Activated B cell treated with CpG ODN at 0.5 μM for 24 hours (primary cell): ENCODE measurements at regions of chr14 and their contacts with region 1.

Region 1: DNA sequence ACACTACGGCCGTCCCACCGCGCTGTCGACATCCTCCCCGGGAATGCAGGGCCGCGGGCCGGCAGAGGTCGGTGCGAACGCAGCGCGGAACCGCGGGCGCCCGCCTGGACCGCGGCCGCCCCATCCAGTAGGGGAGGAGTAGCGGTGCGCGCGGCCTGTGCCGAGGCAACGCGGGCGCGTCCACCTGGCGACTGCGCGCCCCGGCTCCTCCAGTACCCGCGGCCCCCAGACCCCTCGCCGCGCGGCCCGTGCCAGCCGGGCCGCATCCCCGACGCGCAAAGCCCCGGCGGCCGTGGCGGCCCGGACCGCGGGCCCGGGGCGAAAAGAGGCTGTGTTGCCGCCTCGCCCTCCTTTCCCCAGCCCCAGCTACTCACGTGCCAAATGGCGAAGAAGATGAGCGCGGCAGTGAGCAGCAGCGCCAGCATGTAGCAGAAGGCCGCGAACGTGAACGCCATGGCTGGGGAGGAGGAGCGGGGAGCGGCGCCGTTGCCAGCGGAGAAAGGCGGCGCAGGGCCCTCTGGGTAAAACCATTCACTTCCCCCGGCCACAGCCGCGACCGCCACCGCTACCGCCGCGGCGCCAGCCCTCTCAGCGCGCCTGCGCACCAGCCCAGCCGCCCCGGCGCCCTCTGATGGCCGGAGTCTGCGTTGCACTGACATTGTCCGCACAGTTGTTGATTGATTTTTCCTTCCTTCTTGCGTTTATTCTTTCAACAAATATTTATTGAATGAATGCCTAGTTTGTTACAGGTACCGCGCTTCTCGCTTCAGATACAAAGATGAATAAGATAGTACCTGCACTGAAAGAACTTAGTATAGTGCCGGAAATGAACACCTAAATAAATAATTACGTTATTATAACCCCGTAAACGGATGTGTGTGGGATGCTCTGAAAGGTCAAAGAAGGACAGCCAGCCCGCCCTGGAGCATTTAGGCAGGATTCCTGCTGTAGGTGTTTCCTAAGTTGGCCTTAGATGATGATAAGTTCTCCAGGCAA is at the start of gene CNIH1:
- DNase-seq: peak; percentile 98
- ATAC-seq: peak; percentile 95
- H3K4me3 Mint-ChIP-seq: peak within 1 kb of the TSS; percentile 86
- H3K27ac Mint-ChIP-seq: peak within 1 kb of the TSS; percentile 88
- H3K4me1 Mint-ChIP-seq: peaks cover 50% of the 10 kb centered on the region
- H3K27me3 Mint-ChIP-seq: peaks cover 3% of the 10 kb centered on the region
- CTCF ChIP-seq: peak; percentile 40
- total RNA-seq, gene CNIH1: 40.6 and 43.5 TPM in 2 replicates

Region 2: DNA sequence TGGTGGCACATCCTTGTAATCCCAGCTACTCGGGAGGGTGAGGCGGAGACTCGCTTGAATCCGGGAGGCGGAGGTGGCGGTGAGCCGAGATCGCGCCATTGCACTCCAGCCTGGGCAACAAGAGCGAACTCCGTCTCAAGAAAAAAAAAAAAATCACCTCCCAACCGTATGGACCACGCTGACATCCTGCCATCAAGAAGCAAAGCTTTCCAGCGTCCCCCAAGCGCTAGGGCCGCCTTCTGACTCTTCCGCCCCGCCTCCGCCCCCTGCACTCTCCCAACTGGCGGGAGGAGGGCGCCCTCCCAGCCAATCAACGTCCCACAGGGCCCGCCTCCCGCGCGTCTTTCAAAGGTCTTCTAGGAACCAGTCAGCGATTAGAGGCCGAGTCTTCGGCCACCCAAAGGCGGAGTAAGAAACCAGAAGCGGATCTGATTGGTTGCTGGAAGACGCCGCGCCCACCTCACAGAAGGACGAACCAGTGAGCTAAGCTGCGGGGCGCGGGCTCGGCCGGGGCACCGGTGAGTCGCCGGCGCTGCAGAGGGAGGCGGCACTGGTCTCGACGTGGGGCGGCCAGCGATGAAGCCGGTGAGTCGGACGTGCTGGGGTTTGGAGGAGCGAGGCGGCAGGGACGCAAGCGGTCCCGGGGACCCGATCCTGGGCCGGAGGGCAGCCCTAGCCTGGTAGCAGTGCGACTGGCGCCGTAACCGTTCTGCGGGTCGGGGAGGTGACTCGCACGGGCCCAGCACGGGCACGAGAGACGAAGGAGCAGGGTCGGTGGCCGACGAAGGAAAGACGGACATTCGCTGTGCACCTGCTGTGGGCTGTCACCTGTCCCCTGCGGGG is 44.5 kb before region 1 on chr14 and contains the start of gene CDKN3:
- CTCF ChIA-PET with region 1: no interaction called
- POLR2A ChIA-PET with region 1: no interaction called
- intact Hi-C with region 1: loop called (anchors 1 kb)
- DNase-seq: peak; percentile 94
- ATAC-seq: peak; percentile 94
- H3K4me3 Mint-ChIP-seq: peak within 1 kb of the TSS; percentile 86
- H3K27ac Mint-ChIP-seq: peak within 1 kb of the TSS; percentile 82
- H3K4me1 Mint-ChIP-seq: peaks cover 23% of the 10 kb centered on the region
- H3K27me3 Mint-ChIP-seq: no peaks in the 10 kb centered on the region
- CTCF ChIP-seq: no peak
- total RNA-seq, gene CDKN3: 0.91 and 1.6 TPM in 2 replicates

Region 3: DNA sequence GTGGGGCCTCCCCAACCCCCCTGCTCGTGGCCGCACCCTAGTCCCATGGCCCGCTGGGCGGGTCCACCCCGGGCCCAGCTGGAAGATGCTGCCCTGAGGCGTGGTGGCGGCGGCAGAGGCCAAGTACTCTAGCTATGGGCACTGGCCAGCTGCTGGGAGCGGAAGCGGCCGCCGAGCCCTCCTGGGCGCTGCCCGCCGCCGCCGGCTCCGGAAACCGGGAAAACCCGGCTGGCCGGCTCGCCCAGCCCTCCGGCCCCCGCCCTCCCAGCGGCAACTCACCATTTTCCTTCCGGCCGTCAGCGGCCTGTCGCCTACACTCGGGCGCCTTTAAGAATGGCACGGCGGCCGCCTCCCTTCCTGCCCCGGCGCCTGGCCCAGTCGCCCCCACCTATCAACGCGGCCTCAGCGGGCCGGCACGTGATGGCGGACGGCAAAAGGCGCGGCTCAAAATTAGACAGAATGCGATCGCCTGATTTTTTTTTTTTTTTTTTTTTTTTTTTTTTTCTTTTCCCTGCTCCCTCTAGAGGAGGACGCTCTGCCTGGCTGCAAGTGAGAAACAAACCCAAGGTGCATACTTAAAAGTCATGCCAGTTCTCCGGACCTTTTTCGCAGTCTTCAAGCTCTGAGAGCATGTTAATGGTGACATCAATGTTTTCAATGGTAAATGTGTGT is 47.6 kb after region 1 on chr14 and contains the start of gene GMFB:
- CTCF ChIA-PET with region 1: no interaction called
- POLR2A ChIA-PET with region 1: interaction called, 3 read pairs
- intact Hi-C with region 1: loop called (anchors 1 kb)
- DNase-seq: peak; percentile 80
- ATAC-seq: peak; percentile 96
- H3K4me3 Mint-ChIP-seq: peak within 1 kb of the TSS; percentile 94
- H3K27ac Mint-ChIP-seq: peak within 1 kb of the TSS; percentile 94
- H3K4me1 Mint-ChIP-seq: peaks cover 66% of the 10 kb centered on the region
- H3K27me3 Mint-ChIP-seq: no peaks in the 10 kb centered on the region
- CTCF ChIP-seq: no peak
- total RNA-seq, gene GMFB: 39.5 and 43.0 TPM in 2 replicates

Region 4: DNA sequence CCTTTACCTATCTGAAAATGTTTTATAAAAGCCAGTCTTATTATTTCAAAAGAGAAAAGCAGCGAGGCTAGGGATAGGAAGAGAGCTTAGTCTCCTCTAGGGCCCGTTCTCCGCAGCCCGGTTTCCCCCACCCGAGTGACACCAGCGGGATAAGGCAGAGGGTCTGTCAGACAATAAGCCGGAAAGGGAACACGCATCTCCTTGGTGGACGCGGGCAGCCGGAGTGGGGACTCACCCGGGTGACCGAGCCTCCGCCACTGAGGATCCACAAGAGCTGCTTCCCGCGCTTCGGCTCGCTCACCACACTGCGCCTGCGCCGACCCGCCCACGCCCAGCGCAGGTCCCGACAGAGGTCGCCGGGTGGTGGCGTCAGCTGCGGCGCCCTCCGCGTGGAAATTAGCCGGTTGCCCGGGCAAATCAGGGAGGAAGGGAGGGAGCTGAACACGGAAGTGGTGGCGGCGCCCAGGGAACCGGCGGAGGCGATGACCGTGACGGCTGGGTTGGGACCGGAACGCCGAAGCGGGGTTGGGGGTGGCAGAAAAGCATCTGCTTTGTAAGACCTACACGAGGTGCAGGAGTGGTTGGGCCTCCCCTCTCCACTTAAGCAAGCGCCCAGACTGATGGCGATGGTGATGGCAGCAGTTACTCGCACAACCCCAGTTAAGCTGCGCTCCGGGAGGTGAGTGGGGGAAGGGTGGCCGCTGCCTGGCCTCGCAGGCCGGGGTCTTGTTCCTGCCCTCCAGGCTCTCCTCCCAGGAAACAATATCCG is 585.8 kb after region 1 on chr14 and contains the starts of genes SOCS4 and WDHD1:
- CTCF ChIA-PET with region 1: no interaction called
- POLR2A ChIA-PET with region 1: no interaction called
- intact Hi-C with region 1: loop called (anchors 1 kb)
- DNase-seq: peak; percentile 99
- ATAC-seq: peak; percentile 92
- H3K4me3 Mint-ChIP-seq: peak within 1 kb of the TSS; percentile 95
- H3K27ac Mint-ChIP-seq: peak within 1 kb of the TSS; percentile 92
- H3K4me1 Mint-ChIP-seq: peaks cover 50% of the 10 kb centered on the region
- H3K27me3 Mint-ChIP-seq: no peaks in the 10 kb centered on the region
- CTCF ChIP-seq: no peak
- total RNA-seq, gene SOCS4: 29.2 and 30.3 TPM in 2 replicates
- total RNA-seq, gene WDHD1: 9.3 and 9.5 TPM in 2 replicates